ENCODE measurements at regions of chr5 and their contacts with region 1.

Region 1: DNA sequence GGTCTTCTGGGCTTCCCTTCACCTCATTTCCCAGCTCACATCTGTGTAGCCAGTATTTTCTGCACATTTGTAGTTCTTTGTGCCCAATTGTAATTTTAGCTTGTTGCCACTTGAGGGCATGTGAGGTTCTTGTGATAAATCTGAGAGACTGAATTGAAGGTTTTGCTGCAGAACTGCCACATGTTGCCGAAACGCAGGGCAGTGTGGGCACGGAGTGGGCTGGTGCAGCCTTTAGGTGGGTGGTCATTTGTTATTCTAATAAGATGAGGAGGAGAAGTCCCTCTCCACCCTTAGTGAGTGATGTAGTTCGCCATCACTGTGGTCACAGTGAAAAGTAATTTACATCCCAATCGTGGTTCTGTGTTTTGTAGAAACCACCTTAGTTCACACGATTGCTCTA is 21.2 kb downstream of the OTULIN start:
- DNase-seq: peak; percentile 30
- ATAC-seq: peak; percentile 98
- H3K4me3 Mint-ChIP-seq: peak overlapping the region; percentile 44
- H3K27ac Mint-ChIP-seq: peak overlapping the region; percentile 67
- H3K4me1 Mint-ChIP-seq: peaks cover 15% of the 10 kb centered on the region
- H3K27me3 Mint-ChIP-seq: no peaks in the 10 kb centered on the region
- CTCF ChIP-seq: no peak

Region 2: DNA sequence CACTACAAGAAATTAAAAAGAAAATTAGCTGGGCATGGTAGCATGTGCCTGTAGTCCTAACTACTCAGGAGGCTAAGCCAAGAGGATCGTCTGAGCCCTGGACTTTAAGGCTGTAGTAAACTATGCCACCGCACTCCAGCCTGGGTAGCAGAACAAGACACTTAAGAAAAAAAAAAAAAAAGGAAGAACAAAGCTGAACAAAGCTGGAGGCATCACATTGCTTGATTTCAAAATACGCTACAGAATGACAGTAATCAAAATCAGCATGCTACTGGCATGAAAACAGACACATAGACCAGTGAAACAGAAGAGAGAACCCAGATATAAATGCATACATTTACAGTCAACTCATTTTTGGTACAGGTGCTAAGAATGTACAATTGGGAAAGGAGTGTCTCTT is 35.7 kb before region 1 on chr5:
- CTCF ChIA-PET with region 1: interaction called, 24 read pairs
- POLR2A ChIA-PET with region 1: interaction called, 3 read pairs
- intact Hi-C with region 1: no loop called
- DNase-seq: no peak
- ATAC-seq: no peak
- H3K4me3 Mint-ChIP-seq: no peak overlapping the region
- H3K27ac Mint-ChIP-seq: no peak overlapping the region
- H3K4me1 Mint-ChIP-seq: peaks cover 2% of the 10 kb centered on the region
- H3K27me3 Mint-ChIP-seq: peaks cover 9% of the 10 kb centered on the region
- CTCF ChIP-seq: no peak

Region 3: DNA sequence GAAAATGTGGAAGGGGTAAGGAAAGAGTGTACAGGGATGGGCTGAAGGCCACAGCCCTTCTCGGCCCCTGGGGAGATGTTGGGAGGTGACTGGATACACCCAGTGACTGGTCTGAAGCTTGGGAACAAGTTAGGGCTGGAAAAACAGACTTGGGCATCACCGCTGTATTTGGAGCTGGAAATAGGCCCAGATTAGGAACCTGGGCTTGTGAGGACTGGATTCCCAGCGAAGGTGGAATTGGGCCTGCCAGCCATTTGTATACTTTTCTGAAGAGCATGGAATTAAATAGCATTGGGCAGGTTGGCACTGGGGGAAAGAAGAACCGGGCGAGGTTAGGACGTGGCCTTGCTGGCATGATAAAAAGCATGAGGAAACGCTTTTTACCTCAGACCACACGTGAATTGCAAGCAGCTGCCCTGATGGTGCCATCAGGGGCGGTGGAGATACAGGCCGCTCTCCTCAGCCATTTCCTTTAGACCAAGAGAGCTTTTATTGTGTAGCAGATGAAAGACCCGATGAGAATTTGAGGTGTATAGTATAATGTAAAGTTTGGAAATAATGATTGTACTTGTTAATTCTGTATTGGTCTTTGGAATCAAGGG is 16.6 kb after region 1 on chr5:
- CTCF ChIA-PET with region 1: no interaction called
- POLR2A ChIA-PET with region 1: no interaction called
- intact Hi-C with region 1: loop called (anchors 2 kb)
- DNase-seq: no peak
- ATAC-seq: no peak
- H3K4me3 Mint-ChIP-seq: no peak overlapping the region
- H3K27ac Mint-ChIP-seq: peak overlapping the region; percentile 59
- H3K4me1 Mint-ChIP-seq: peaks cover 24% of the 10 kb centered on the region
- H3K27me3 Mint-ChIP-seq: no peaks in the 10 kb centered on the region
- CTCF ChIP-seq: no peak

Region 4: DNA sequence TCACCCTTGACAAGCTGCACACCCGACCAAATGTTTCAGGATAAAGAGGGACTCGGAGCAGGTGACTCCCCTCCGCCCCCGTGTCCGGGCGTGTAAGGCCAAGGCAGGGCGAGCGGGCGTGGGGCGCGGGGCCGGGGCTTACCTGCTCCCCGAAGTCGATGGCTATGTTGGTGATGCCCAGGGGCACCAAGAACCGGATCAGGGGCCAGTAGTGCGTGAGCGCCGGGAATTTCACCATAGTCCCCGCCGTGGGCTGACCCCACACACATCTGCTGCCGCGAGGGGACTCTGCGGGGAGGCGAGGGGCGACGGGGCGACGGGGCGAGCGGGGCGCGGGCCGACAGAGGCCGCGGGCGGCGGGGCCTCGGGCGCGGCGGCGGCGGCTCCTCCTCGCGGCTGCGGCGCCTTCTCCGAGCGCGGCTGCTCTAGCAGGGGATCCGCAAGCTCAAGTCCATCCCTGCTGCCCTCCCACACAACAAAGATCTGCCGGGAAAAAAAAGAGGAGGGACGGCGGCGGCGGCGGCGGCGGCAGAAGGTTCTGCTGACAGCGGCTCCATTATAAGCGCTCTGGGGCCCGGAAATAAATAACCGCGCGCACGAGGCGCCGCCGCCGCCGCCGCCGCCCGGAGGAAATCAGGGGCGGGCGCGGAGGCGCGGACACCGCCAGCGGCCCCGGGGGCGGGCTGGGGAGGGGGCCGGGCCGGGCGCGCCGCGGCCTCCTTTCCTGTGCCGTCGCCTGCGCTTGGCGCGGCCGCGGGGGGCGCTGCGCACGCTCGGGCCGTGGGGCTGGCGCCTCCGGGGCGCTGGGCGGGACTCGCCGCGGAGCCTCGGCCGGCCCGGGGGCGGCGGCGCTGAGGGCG is 185.7 kb after region 1 on chr5 and contains the start of gene ANKH:
- CTCF ChIA-PET with region 1: interaction called, 5 read pairs
- POLR2A ChIA-PET with region 1: no interaction called
- intact Hi-C with region 1: loop called (anchors 5 kb)
- DNase-seq: peak; percentile 86
- ATAC-seq: peak; percentile 88
- H3K4me3 Mint-ChIP-seq: peak within 1 kb of the TSS; percentile 87
- H3K27ac Mint-ChIP-seq: peak within 1 kb of the TSS; percentile 80
- H3K4me1 Mint-ChIP-seq: peaks cover 22% of the 10 kb centered on the region
- H3K27me3 Mint-ChIP-seq: no peaks in the 10 kb centered on the region
- CTCF ChIP-seq: no peak
- total RNA-seq, gene ANKH: 43.3 and 43.7 TPM in 2 replicates

Region 5: DNA sequence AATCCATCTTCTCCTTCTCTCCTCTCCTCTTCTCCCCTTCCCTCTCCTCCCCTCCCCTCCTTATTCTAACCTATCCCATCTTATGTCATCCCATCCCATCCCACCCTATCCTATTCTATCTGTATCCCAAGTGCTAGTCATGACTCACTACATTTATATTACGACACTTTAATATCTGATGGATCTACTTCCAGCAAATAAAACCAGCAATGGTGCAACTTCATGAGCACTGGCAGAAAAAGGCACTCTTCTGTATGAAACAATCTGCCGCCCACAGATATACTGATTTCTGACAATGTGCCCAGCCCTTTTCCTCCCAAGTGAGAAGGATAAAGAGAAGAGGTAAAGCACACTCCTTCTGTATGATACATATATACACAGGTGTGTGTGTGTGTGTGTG is 272.4 kb after region 1 on chr5:
- CTCF ChIA-PET with region 1: interaction called, 3 read pairs
- POLR2A ChIA-PET with region 1: interaction called, 3 read pairs
- intact Hi-C with region 1: loop called (anchors 2 kb)
- DNase-seq: no peak
- ATAC-seq: no peak
- H3K4me3 Mint-ChIP-seq: no peak overlapping the region
- H3K27ac Mint-ChIP-seq: no peak overlapping the region
- H3K4me1 Mint-ChIP-seq: peaks cover 4% of the 10 kb centered on the region
- H3K27me3 Mint-ChIP-seq: peaks cover 6% of the 10 kb centered on the region
- CTCF ChIP-seq: no peak

Region 6: GRCh38 chr5:15013654-15014463 is 328.1 kb after region 1 on chr5:
- CTCF ChIA-PET with region 1: interaction called, 9 read pairs
- POLR2A ChIA-PET with region 1: no interaction called
- intact Hi-C with region 1: loop called (anchors 1 kb)
- DNase-seq: no peak
- ATAC-seq: peak; percentile 40
- H3K4me3 Mint-ChIP-seq: no peak overlapping the region
- H3K27ac Mint-ChIP-seq: no peak overlapping the region
- H3K4me1 Mint-ChIP-seq: no peaks in the 10 kb centered on the region
- H3K27me3 Mint-ChIP-seq: peaks cover 7% of the 10 kb centered on the region
- CTCF ChIP-seq: peak; percentile 60